Stomach (tissue), 19 donors: ENCODE measurements at regions of chr10 and their contacts with region 1.

Region 1: GRCh38 chr10:104220522-104220921 is 11.6 kb downstream of the CFAP43 start:
- DNase-seq: peak in 1 of 2 donors; percentile 77
- H3K4me3 ChIP-seq: no peak overlapping the region
- H3K27ac ChIP-seq: peak overlapping the region in 1 of 5 donors; percentile 13
- H3K4me1 ChIP-seq: no peaks in the 10 kb centered on the region
- H3K27me3 ChIP-seq: no peaks in the 10 kb centered on the region
- CTCF ChIP-seq: no peak
- EP300 ChIP-seq: no peak
- POLR2A ChIP-seq: no peak

Region 2: DNA sequence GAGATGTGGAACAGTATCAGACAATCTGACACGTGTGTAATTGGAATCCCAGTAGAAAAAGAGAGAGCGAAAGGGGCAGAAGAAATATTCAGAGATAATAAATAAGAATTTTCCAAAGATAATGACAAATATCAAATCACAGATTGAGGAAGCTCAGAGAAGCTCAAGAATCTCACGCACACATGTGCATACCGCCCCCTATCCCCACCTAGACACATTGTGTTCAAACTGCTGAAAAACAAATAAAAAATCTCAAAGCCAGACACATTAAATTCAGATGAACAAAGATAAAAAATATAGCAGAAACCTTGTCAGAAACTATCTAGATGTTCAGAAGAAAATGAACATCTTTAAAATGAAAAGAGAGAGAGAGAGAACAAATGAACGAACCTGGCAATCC is 81.3 kb before region 1 on chr10:
- intact Hi-C with region 1: loop called (anchors 10 kb)
- DNase-seq: no peak
- H3K4me3 ChIP-seq: no peak overlapping the region
- H3K27ac ChIP-seq: no peak overlapping the region
- H3K4me1 ChIP-seq: no peaks in the 10 kb centered on the region
- H3K27me3 ChIP-seq: peaks cover 0 to 4% (median 0%) of the 10 kb centered on the region in 3 donors
- CTCF ChIP-seq: no peak
- EP300 ChIP-seq: no peak
- POLR2A ChIP-seq: no peak

Region 3: GRCh38 chr10:104155591-104155990 is 64.9 kb before region 1 on chr10:
- intact Hi-C with region 1: no loop called
- DNase-seq: no peak
- H3K4me3 ChIP-seq: no peak overlapping the region
- H3K27ac ChIP-seq: no peak overlapping the region
- H3K4me1 ChIP-seq: no peaks in the 10 kb centered on the region
- H3K27me3 ChIP-seq: peaks cover 0 to 7% (median 4%) of the 10 kb centered on the region in 3 donors
- CTCF ChIP-seq: no peak
- EP300 ChIP-seq: no peak
- POLR2A ChIP-seq: no peak

Region 4: GRCh38 chr10:104288358-104288757 is 67.8 kb after region 1 on chr10:
- intact Hi-C with region 1: no loop called
- DNase-seq: no peak
- H3K4me3 ChIP-seq: no peak overlapping the region
- H3K27ac ChIP-seq: no peak overlapping the region
- H3K4me1 ChIP-seq: peaks cover 0 to 13% (median 4%) of the 10 kb centered on the region in 4 donors
- H3K27me3 ChIP-seq: no peaks in the 10 kb centered on the region
- CTCF ChIP-seq: no peak
- EP300 ChIP-seq: no peak
- POLR2A ChIP-seq: no peak